ENCODE measurements at regions of chr5 and their contacts with region 1.

Region 1: DNA sequence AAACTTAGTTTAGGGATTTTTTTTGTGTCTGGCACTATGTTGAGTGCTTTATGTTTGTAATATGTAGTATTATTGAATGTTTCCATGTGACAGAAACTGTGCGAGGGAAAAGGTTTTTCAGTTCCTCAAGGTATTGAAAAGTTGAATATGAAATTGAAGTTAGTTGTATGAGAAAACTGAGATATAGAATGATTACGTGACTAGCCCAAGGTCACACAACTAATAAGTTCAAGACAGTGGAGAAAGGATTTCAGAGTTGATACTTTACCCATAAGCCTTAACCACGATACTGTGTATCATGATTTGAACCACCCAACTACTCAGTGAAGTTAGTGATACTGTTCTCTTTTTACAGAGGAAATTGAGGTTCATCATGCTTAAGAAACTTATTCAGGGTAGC is 5.7 kb downstream of the NIPBL start:
- DNase-seq: no peak
- H3K4me3 ChIP-seq: no peak overlapping the region
- H3K27ac ChIP-seq: no peak overlapping the region
- H3K4me1 ChIP-seq: peaks cover 4 to 90% (median 52%) of the 10 kb centered on the region in 4 donors
- H3K27me3 ChIP-seq: no peaks in the 10 kb centered on the region
- CTCF ChIP-seq: no peak
- EP300 ChIP-seq: no peak
- POLR2A ChIP-seq: no peak

Region 2: GRCh38 chr5:36944607-36945225 is 62.5 kb after region 1 on chr5:
- intact Hi-C with region 1: loop called (anchors 10 kb)
- DNase-seq: peak in 1 of 2 donors; percentile 77
- H3K4me3 ChIP-seq: no peak overlapping the region
- H3K27ac ChIP-seq: no peak overlapping the region
- H3K4me1 ChIP-seq: peaks cover 0 to 70% (median 41%) of the 10 kb centered on the region in 4 donors
- H3K27me3 ChIP-seq: no peaks in the 10 kb centered on the region
- CTCF ChIP-seq: peak in 5 of 7 experiments; percentile 19 to 71 (median 41)
- EP300 ChIP-seq: no peak
- POLR2A ChIP-seq: no peak